Astrocyte of the cerebellum (primary cell): ENCODE measurements at regions of chr2 and their contacts with region 1.

Region 1: GRCh38 chr2:203014456-203015199 is at the start of gene NBEAL1:
- DNase-seq: peak; percentile 99
- H3K4me3 ChIP-seq: peak within 1 kb of the TSS; percentile 93
- CTCF ChIP-seq: no peak

Region 2: DNA sequence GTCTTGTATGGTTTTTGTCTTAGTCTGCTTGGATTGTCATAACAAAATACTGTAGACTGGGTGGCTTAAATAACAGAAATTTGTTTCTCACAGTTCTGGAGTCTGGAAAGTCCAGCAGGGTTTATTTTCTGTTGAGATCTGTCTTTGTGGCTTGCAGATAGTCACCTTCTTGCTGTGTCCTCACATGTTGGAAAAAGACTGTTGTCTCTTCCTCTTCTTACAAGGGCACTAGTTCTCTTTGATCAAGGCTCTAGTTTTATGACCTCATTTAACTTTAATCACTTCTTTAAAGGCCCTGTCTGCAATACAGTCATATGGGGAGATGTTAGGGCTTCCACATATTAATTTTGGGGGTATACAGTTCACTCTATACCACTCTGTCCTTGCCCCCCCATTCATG is 56.5 kb after region 1 on chr2:
- in situ Hi-C with region 1: loop called (anchors 5 kb)
- DNase-seq: no peak
- H3K4me3 ChIP-seq: no peak overlapping the region
- CTCF ChIP-seq: no peak